PC-3 (cell line): ENCODE measurements at regions of chr3 and their contacts with region 1.

Region 1: GRCh38 chr3:132399054-132399929 is 18.0 kb upstream of the DNAJC13 start:
- DNase-seq: peak; percentile 61
- ATAC-seq: peak; percentile 51; the same call in 1 of the 2 replicates
- H3K4me3 ChIP-seq: no peak overlapping the region
- H3K27ac ChIP-seq: no peak overlapping the region
- H3K4me1 ChIP-seq: no peaks in the 10 kb centered on the region
- H3K27me3 ChIP-seq: no peaks in the 10 kb centered on the region
- CTCF ChIP-seq: peak; percentile 88

Region 2: DNA sequence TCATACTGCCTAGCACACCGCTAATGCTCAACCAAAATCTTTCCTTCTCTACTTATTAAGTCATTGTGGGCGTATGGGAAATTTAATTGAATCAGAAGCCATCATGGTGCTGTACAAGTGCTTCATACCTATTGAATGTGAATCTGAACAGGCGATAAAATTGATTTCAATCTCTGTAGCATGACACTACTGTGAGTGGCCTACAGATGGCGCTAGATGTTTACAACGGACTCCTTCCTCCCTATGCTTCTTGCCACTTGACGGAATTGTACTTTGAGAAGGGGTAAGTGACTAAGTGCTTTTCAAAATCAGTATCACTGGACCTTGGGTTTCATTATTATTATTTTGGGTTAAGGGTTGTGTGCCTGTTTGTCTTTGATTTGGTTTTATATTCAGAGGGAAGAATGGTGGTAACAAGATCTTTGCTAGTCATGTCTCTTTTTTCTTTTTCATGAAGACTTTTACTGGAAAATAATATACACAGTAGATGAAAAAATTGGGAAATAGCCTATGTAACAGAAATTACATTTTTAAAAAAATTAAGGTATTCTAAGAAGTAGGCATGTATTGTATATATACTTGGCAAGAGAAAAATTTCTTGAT is 46.6 kb before region 1 on chr3:
- CTCF ChIA-PET with region 1: interaction called, 8 read pairs
- POLR2A ChIA-PET with region 1: no interaction called
- intact Hi-C with region 1: loop called (anchors 1 kb)
- DNase-seq: peak; percentile 79
- ATAC-seq: peak; percentile 69
- H3K4me3 ChIP-seq: no peak overlapping the region
- H3K27ac ChIP-seq: no peak overlapping the region
- H3K4me1 ChIP-seq: no peaks in the 10 kb centered on the region
- H3K27me3 ChIP-seq: no peaks in the 10 kb centered on the region
- CTCF ChIP-seq: peak; percentile 86